PC-3 (cell line): ENCODE measurements at regions of chr14 and their contacts with region 1.

Region 1: DNA sequence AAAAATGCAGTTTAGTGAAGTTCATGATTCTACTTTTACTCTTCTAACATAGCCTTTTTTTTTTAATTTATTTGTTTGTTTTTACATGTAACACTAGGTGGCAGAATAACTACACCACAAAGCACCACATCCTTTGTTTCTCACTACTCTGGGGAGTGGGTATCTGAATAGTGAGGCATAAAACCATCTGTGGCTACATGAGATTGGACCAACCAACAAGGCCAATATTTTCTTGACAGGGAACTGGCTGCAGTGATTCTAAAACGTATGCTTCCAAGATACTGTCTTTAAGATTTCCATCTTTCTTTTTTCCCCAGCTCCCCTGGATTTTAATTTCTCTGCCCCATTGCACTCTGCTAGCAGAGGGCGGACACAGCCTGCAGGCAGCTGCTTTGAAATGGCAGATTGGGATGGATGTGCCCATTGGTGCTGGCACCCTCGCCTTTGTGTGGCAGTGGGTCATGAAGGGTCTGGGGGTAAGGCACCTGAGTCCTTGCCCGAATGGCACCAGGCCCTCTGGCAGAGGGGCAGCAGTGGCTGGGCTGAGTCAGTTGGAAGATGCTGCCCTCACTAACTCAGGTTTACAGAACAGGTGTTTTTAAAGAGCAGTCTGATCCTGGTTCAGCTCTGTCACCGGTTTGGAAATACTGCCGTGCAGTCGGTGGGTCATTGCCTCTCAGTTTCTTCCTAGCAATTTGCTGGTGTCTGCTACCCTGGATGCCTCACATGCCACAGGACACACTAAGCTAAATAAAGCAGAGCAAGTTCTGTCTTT is 429.1 kb downstream of the RAD51B start:
- DNase-seq: peak; percentile 71
- ATAC-seq: 0 out of 2 replicates have a peak, but pooled peaks have one; percentile 6
- H3K4me3 ChIP-seq: no peak overlapping the region
- H3K27ac ChIP-seq: peak overlapping the region; percentile 82
- H3K4me1 ChIP-seq: peaks cover 65% of the 10 kb centered on the region
- H3K27me3 ChIP-seq: no peaks in the 10 kb centered on the region
- CTCF ChIP-seq: peak; percentile 85

Region 2: GRCh38 chr14:67883717-67884116 is 365.0 kb before region 1 on chr14:
- CTCF ChIA-PET with region 1: interaction called, 3 read pairs
- POLR2A ChIA-PET with region 1: no interaction called
- intact Hi-C with region 1: loop called (anchors 5 kb)
- DNase-seq: peak; percentile 62
- ATAC-seq: peak; percentile 50; the same call in 1 of the 2 replicates
- H3K4me3 ChIP-seq: no peak overlapping the region
- H3K27ac ChIP-seq: no peak overlapping the region
- H3K4me1 ChIP-seq: no peaks in the 10 kb centered on the region
- H3K27me3 ChIP-seq: no peaks in the 10 kb centered on the region
- CTCF ChIP-seq: peak; percentile 63

Region 3: GRCh38 chr14:68084256-68084655 is 164.4 kb before region 1 on chr14:
- CTCF ChIA-PET with region 1: no interaction called
- POLR2A ChIA-PET with region 1: no interaction called
- intact Hi-C with region 1: loop called (anchors 1 kb)
- DNase-seq: peak; percentile 37
- ATAC-seq: peak; percentile 48
- H3K4me3 ChIP-seq: no peak overlapping the region
- H3K27ac ChIP-seq: no peak overlapping the region
- H3K4me1 ChIP-seq: no peaks in the 10 kb centered on the region
- H3K27me3 ChIP-seq: no peaks in the 10 kb centered on the region
- CTCF ChIP-seq: peak; percentile 71

Region 4: GRCh38 chr14:68216079-68216478 is 32.6 kb before region 1 on chr14:
- CTCF ChIA-PET with region 1: no interaction called
- POLR2A ChIA-PET with region 1: no interaction called
- intact Hi-C with region 1: no loop called
- DNase-seq: no peak
- ATAC-seq: peak; percentile 11; the same call in 1 of the 2 replicates
- H3K4me3 ChIP-seq: no peak overlapping the region
- H3K27ac ChIP-seq: no peak overlapping the region
- H3K4me1 ChIP-seq: peaks cover 17% of the 10 kb centered on the region
- H3K27me3 ChIP-seq: no peaks in the 10 kb centered on the region
- CTCF ChIP-seq: no peak

Region 5: DNA sequence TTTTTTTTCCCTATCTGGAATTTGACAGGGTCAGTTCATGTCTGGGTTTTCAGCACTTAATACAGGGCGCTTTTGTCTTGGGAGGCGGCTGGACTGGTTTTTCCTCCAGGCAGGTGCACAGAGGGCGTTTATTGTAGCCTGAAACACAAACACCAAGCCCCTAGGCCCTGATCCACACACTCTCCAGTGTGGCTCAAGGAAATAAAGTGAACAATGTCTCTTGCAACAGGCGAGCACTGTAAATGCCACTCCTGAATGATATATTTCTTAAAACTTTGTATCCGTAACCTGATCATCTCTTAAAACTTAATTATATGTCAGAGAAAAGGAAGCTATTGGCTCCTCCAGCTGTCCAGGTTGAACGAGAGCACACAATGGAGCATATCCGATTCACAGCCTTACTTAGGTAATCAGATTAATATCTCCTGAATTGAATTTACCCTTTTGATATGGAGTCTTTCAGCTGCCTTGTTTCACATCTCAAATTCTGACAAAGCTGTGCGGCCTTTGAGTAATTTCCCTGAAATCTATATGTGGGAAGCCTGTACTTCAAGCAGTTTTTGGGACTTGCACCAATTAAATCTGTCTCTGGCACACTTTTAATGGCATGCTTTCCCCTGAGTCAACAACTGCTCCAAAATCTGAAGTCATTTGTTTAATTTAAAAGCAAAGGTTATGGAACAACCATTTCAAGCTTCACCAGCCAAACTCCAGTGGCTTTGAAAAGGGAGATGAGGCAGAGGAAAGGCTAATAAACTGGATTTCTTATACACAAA is 58.5 kb after region 1 on chr14:
- CTCF ChIA-PET with region 1: interaction called, 3 read pairs
- POLR2A ChIA-PET with region 1: no interaction called
- intact Hi-C with region 1: loop called (anchors 1 kb)
- DNase-seq: peak; percentile 84
- ATAC-seq: peak; percentile 83
- H3K4me3 ChIP-seq: peak overlapping the region; percentile 4; the same call in 1 of the 2 replicates
- H3K27ac ChIP-seq: peak overlapping the region; percentile 75
- H3K4me1 ChIP-seq: peaks cover 41% of the 10 kb centered on the region
- H3K27me3 ChIP-seq: no peaks in the 10 kb centered on the region
- CTCF ChIP-seq: no peak

Region 6: GRCh38 chr14:68444449-68445168 is 195.9 kb after region 1 on chr14:
- CTCF ChIA-PET with region 1: no interaction called
- POLR2A ChIA-PET with region 1: no interaction called
- intact Hi-C with region 1: loop called (anchors 2 kb)
- DNase-seq: peak; percentile 64
- ATAC-seq: peak; percentile 44
- H3K4me3 ChIP-seq: no peak overlapping the region
- H3K27ac ChIP-seq: no peak overlapping the region
- H3K4me1 ChIP-seq: peaks cover 42% of the 10 kb centered on the region
- H3K27me3 ChIP-seq: no peaks in the 10 kb centered on the region
- CTCF ChIP-seq: no peak

Region 7: GRCh38 chr14:68598621-68599447 is 350.2 kb after region 1 on chr14:
- CTCF ChIA-PET with region 1: no interaction called
- POLR2A ChIA-PET with region 1: no interaction called
- intact Hi-C with region 1: loop called (anchors 1 kb)
- DNase-seq: peak; percentile 97
- ATAC-seq: peak; percentile 92
- H3K4me3 ChIP-seq: peak overlapping the region; percentile 60
- H3K27ac ChIP-seq: peak overlapping the region; percentile 99
- H3K4me1 ChIP-seq: peaks cover 27% of the 10 kb centered on the region
- H3K27me3 ChIP-seq: no peaks in the 10 kb centered on the region
- CTCF ChIP-seq: no peak

Region 8: DNA sequence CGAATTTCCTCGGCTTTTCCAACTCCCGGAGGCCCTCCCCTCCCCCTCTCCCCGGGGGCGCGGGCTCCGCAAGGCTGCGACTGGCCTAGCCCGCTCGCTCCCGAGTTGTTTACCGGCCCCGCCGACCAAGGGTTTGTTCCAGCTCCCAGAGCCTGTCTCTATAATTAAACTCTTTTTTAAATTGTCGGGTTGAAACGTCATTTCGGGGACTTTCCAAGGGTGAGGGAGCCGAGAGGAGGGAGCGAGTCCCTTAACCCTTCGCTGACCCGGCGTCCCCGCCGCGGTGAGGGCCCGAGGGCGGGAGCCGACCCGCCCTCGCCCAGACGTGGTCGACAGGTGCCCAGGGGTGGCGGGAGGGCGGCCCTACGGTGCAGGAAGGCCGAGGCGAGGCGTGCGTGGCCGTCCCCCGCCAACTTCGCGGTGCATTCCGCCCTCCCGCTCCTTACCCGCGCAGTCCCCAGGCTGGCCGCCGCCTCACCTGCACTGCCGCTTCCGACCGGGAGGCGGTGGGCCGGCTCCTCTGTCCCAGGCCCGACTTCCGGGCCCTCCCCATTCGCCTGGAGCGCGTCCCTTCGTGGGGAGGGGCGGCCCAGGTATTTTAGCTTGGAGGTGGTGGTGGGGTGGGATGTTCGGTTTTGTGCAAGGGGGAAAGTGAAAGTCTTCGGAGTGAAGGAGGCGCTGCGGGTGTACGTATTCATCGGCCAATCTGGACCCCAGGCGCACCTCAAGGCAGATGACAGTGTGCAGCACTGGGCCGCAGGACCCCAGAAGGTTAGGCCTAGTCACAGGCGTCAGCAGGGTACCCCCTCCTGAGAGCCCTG is 547.1 kb after region 1 on chr14:
- CTCF ChIA-PET with region 1: interaction called, 11 read pairs
- POLR2A ChIA-PET with region 1: interaction called, 23 read pairs
- intact Hi-C with region 1: no loop called
- DNase-seq: peak; percentile 84
- ATAC-seq: peak; percentile 55
- H3K4me3 ChIP-seq: peak overlapping the region; percentile 90
- H3K27ac ChIP-seq: peak overlapping the region; percentile 97
- H3K4me1 ChIP-seq: peaks cover 19% of the 10 kb centered on the region
- H3K27me3 ChIP-seq: no peaks in the 10 kb centered on the region
- CTCF ChIP-seq: peak; percentile 66